Activated T-helper 2 cell treated with anti-CD3 and anti-CD28 coated beads, Interferon-gamma antibody, Interleukin-2, Interleukin-4, amounts not matched to agents 10 μg/mL and 5 μg/mL and 100 μg/mL, durations not matched to agents 14 hours and 24 hours and 36 hours (primary cell): ENCODE measurements at regions of chr6 and their contacts with region 1.

Region 1: DNA sequence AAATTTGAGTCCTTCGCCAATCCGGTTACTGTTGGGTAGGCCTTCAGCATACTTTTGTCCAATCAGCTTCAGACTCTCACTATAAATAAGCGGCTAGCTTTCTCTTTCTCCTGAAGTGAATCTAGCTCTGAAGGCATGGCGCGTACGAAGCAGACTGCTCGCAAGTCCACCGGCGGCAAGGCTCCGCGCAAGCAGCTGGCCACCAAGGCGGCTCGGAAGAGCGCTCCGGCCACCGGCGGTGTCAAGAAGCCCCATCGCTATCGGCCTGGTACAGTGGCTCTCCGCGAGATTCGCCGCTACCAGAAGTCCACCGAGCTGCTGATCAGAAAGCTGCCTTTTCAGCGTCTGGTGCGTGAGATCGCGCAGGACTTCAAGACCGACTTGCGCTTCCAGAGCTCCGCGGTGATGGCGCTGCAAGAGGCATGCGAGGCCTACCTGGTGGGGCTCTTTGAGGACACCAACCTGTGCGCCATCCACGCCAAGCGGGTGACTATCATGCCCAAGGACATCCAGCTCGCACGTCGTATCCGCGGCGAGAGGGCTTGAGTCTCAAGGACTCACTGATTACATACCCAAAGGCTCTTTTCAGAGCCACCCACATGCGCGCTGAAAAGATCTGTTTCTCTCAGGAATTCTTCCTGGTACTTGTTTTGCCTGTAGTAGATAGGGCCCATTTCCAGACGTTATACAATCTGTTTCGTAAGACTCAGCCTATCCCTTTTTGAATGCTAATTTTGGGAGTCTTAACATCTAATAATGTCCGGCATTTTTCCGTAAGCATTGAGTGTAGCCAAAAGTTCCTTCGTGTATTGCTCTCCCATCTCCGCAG is 102.0 kb downstream of the OR2B2 start:
- DNase-seq: peak; percentile 83
- H3K4me3 Mint-ChIP-seq: peak overlapping the region; percentile 84
- H3K27ac Mint-ChIP-seq: peak overlapping the region; percentile 92
- H3K4me1 Mint-ChIP-seq: peaks cover 72% of the 10 kb centered on the region
- H3K27me3 Mint-ChIP-seq: no peaks in the 10 kb centered on the region

Region 2: GRCh38 chr6:27132532-27133280 is 677.4 kb before region 1 on chr6:
- intact Hi-C with region 1: loop called (anchors 1 kb)
- DNase-seq: peak; percentile 95
- H3K4me3 Mint-ChIP-seq: no peak overlapping the region
- H3K27ac Mint-ChIP-seq: no peak overlapping the region
- H3K4me1 Mint-ChIP-seq: peaks cover 38% of the 10 kb centered on the region
- H3K27me3 Mint-ChIP-seq: no peaks in the 10 kb centered on the region

Region 3: GRCh38 chr6:27374824-27375612 is 435.1 kb before region 1 on chr6:
- intact Hi-C with region 1: no loop called
- DNase-seq: peak; percentile 43
- H3K4me3 Mint-ChIP-seq: peak overlapping the region; percentile 72
- H3K27ac Mint-ChIP-seq: no peak overlapping the region
- H3K4me1 Mint-ChIP-seq: peaks cover 15% of the 10 kb centered on the region
- H3K27me3 Mint-ChIP-seq: peaks cover 3% of the 10 kb centered on the region

Region 4: DNA sequence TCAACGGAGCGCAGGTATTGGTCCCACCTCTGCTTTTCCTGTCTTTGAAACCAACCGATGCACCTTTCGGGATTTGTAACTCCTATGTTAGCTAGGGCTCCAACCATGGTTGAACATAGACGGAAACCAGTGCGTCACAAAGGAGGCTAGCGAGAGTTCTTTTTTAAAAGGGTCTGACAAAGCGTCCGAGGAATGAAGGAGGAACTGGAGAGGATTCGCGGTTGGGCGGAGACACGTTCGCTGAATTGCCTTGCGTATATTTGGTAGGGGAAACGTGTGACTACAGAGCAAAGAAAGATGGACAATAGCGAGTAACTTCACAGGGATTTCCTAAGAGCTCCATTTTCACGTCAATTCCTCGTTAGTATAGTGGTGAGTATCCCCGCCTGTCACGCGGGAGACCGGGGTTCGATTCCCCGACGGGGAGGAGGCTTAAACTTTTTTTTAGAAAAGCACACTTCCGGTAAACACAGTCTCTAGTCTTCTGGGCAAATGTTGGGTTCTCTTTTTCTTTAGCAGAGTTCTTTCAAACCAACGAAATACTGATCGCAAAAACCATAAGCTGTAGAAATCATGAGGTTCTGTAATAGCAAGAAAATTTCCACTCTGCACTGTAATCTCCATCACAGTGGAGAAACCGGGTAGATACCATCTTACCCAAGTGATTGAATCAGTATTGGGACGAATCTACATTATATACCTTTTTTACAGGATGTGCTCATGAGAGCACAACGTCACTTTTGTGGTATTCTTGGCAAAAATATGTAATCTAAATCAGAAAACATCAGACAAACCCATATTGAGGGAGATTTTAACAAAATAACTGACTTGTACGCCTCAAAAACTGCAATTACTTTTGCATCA is 330.6 kb before region 1 on chr6:
- intact Hi-C with region 1: loop called (anchors 5 kb)
- DNase-seq: peak; percentile 82
- H3K4me3 Mint-ChIP-seq: no peak overlapping the region
- H3K27ac Mint-ChIP-seq: no peak overlapping the region
- H3K4me1 Mint-ChIP-seq: peaks cover 3% of the 10 kb centered on the region
- H3K27me3 Mint-ChIP-seq: peaks cover 12% of the 10 kb centered on the region

Region 5: GRCh38 chr6:27772261-27773001 is 37.7 kb before region 1 on chr6:
- intact Hi-C with region 1: no loop called
- DNase-seq: peak; percentile 82
- H3K4me3 Mint-ChIP-seq: no peak overlapping the region
- H3K27ac Mint-ChIP-seq: peak overlapping the region; percentile 43
- H3K4me1 Mint-ChIP-seq: peaks cover 12% of the 10 kb centered on the region
- H3K27me3 Mint-ChIP-seq: peaks cover 20% of the 10 kb centered on the region

Region 6: GRCh38 chr6:27825025-27825793 is 15.1 kb after region 1 on chr6:
- intact Hi-C with region 1: loop called (anchors 1 kb)
- DNase-seq: no peak
- H3K4me3 Mint-ChIP-seq: peak overlapping the region; percentile 80
- H3K27ac Mint-ChIP-seq: peak overlapping the region; percentile 89
- H3K4me1 Mint-ChIP-seq: peaks cover 27% of the 10 kb centered on the region
- H3K27me3 Mint-ChIP-seq: no peaks in the 10 kb centered on the region

Region 7: DNA sequence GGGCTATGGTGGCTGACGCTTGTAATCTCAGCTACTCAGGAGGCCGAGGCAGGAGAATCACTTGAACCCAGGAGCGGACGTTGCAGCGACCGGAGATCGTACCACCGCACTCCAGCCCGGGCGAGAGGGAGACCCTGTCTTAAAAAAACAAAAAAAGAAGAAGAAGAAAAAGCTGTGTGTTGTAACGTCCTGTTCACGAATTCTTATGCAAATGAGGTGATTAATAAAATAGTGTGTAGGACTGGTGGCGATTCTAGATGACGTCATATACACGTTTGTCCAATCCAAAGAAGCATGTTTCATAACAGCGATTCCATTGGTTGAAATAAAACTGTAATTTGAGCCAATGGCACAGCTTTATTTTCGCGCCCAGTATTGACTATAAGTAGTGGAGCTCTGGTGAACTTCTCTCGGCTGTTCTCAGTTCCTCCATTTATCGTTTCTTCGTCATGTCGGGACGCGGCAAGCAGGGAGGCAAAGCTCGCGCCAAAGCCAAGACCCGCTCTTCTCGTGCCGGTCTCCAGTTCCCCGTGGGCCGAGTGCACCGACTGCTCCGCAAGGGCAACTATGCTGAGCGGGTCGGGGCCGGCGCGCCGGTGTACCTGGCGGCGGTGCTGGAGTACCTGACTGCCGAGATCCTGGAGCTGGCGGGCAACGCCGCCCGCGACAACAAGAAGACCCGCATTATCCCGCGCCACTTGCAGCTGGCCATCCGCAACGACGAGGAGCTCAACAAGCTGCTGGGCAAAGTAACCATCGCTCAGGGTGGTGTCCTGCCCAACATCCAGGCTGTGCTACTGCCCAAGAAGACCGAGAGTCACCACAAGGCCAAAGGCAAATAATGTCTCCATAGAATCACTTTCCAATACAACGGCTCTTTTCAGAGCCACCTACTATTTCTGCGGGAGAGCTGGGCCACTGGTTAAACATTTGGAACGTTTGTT is 55.0 kb after region 1 on chr6:
- intact Hi-C with region 1: loop called (anchors 1 kb)
- DNase-seq: peak; percentile 83
- H3K4me3 Mint-ChIP-seq: peak overlapping the region; percentile 98
- H3K27ac Mint-ChIP-seq: peak overlapping the region; percentile 99
- H3K4me1 Mint-ChIP-seq: peaks cover 62% of the 10 kb centered on the region
- H3K27me3 Mint-ChIP-seq: no peaks in the 10 kb centered on the region